Activated CD4-positive, alpha-beta memory T cell treated with anti-CD3 and anti-CD28 coated beads, Interleukin-2, amount 10 ng/mL, durations not matched to agents 7 days and 5 days (primary cell): ENCODE measurements at regions of chr17 and their contacts with region 1.

Region 1: GRCh38 chr17:60077672-60078519 is 825 bp downstream of the HEATR6 start:
- DNase-seq: no peak
- H3K4me3 Mint-ChIP-seq: peak overlapping the region; percentile 91
- H3K27ac Mint-ChIP-seq: peak overlapping the region; percentile 92
- H3K4me1 Mint-ChIP-seq: peaks cover 43% of the 10 kb centered on the region
- H3K27me3 Mint-ChIP-seq: no peaks in the 10 kb centered on the region

Region 2: GRCh38 chr17:60065136-60065535 is 12.8 kb before region 1 on chr17:
- CTCF ChIA-PET with region 1: no interaction called
- POLR2A ChIA-PET with region 1: interaction called, 12 read pairs
- DNase-seq: no peak
- H3K4me3 Mint-ChIP-seq: no peak overlapping the region
- H3K27ac Mint-ChIP-seq: no peak overlapping the region
- H3K4me1 Mint-ChIP-seq: no peaks in the 10 kb centered on the region
- H3K27me3 Mint-ChIP-seq: no peaks in the 10 kb centered on the region